Endothelial cell of umbilical vein (primary cell): ENCODE measurements at regions of chr9 and their contacts with region 1.

Region 1: GRCh38 chr9:72292256-72292682 is 72.7 kb downstream of the ZFAND5 start:
- DNase-seq: peak; percentile 58
- H3K4me3 ChIP-seq: no peak overlapping the region
- H3K27ac ChIP-seq: no peak overlapping the region
- H3K4me1 ChIP-seq: no peaks in the 10 kb centered on the region
- H3K27me3 ChIP-seq: peaks cover 2% of the 10 kb centered on the region in 2 experiments
- CTCF ChIP-seq: peak; percentile 11 to 20
- POLR2A ChIP-seq: no peak

Region 2: GRCh38 chr9:71768388-71769174 is 523.7 kb before region 1 on chr9 and contains the start of gene CEMIP2:
- CTCF ChIA-PET with region 1: no interaction called
- POLR2A ChIA-PET with region 1: no interaction called
- dilution Hi-C with region 1: no loop called
- intact Hi-C with region 1: no loop called
- DNase-seq: peak; percentile 89
- H3K4me3 ChIP-seq: peak within 1 kb of the TSS; percentile 97 to 98 (median 98)
- H3K27ac ChIP-seq: peak within 1 kb of the TSS; percentile 91
- H3K4me1 ChIP-seq: peaks cover 33% of the 10 kb centered on the region
- H3K27me3 ChIP-seq: no peaks in the 10 kb centered on the region
- CTCF ChIP-seq: peak; percentile 41 to 67
- POLR2A ChIP-seq: peak; percentile 98
- total RNA-seq, gene CEMIP2: 44.3 and 47.5 TPM in 2 replicates

Region 3: DNA sequence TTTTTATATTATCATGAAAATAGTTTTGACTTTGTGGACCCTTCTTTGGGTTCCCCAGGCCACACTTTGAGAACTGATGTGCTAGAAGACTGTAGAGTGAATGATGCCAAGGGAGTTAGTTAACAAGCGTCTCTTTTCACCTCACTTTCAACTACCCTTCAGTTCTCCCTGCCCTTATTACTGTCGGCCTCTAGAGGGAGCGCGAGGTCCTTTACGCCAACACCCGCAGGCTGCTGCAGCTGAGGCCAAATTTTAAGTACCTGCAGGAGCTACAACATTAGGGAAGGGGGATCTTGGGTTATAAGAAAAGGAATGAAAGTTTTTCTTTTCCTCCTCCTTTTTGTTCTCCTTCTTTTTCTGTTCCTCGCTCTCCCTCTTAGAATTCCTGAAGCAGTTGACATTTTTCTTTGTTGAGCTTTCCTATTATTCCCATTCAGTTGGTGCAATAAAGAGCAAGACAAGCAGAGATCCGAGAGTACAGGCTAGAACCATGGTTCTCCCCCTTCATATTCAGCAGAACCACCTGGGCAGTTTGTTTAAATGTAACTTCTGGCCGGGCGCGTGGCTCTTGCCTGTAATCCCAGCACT is 11.3 kb before region 1 on chr9:
- CTCF ChIA-PET with region 1: interaction called, 73 read pairs
- POLR2A ChIA-PET with region 1: no interaction called
- dilution Hi-C with region 1: no loop called
- intact Hi-C with region 1: no loop called
- DNase-seq: peak; percentile 69
- H3K4me3 ChIP-seq: no peak overlapping the region
- H3K27ac ChIP-seq: no peak overlapping the region
- H3K4me1 ChIP-seq: no peaks in the 10 kb centered on the region
- H3K27me3 ChIP-seq: peaks cover 4 to 5% of the 10 kb centered on the region in 2 experiments
- CTCF ChIP-seq: peak; percentile 85 to 92
- POLR2A ChIP-seq: no peak

Region 4: DNA sequence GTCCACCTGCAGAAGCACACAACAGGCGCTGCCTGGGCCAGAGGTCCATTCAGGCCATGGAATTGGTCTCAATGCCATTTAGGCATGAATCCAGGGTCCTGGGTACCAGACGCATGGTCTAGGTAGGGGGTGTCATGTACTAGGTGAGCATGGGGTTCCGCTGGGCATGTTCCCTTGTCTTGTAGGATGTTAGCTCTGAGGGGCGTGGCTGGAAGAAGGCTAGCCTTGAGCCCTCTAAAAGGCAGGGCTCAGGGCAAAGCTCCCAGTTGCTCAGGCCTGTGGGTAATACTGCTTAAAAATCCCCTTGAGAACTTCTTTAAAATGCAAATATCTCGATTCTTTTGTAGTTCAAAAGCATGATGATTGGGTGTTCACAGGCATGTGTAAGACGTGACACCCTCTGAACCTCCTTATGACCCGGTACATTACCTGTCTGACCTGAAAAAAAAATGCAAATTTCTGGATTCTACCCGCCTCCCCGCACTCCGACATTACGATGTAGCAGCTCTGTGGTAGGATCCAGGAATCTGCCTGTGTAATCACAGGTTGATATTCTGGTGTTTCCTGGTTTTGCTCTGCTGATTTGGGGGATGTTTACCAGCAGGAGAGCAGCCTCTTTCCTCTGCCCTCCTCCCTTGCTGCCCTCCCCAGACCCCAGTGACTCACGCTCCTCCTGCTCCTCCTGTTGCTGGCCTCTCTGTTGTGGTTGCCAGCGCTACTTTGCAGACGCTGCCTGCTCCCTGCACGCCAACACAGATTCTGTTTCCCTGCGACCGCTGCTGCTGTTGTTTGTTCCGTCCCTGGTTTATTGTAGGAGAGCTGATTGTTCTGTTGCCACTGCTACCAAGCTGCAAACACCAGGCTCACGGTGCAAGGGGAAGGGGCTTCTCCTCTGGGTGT is 234.9 kb after region 1 on chr9:
- CTCF ChIA-PET with region 1: interaction called, 3 read pairs
- POLR2A ChIA-PET with region 1: interaction called, 3 read pairs
- dilution Hi-C with region 1: no loop called
- intact Hi-C with region 1: loop called (anchors 5 kb)
- DNase-seq: peak; percentile 97
- H3K4me3 ChIP-seq: no peak overlapping the region
- H3K27ac ChIP-seq: peak overlapping the region; percentile 97
- H3K4me1 ChIP-seq: peaks cover 34% of the 10 kb centered on the region
- H3K27me3 ChIP-seq: no peaks in the 10 kb centered on the region
- CTCF ChIP-seq: no peak
- POLR2A ChIP-seq: no peak

Region 5: GRCh38 chr9:72599879-72600534 is 307.7 kb after region 1 on chr9:
- CTCF ChIA-PET with region 1: interaction called, 14 read pairs
- POLR2A ChIA-PET with region 1: no interaction called
- dilution Hi-C with region 1: no loop called
- intact Hi-C with region 1: no loop called
- DNase-seq: no peak
- H3K4me3 ChIP-seq: no peak overlapping the region
- H3K27ac ChIP-seq: no peak overlapping the region
- H3K4me1 ChIP-seq: no peaks in the 10 kb centered on the region
- H3K27me3 ChIP-seq: no peaks in the 10 kb centered on the region
- CTCF ChIP-seq: no peak
- POLR2A ChIP-seq: no peak

Region 6: DNA sequence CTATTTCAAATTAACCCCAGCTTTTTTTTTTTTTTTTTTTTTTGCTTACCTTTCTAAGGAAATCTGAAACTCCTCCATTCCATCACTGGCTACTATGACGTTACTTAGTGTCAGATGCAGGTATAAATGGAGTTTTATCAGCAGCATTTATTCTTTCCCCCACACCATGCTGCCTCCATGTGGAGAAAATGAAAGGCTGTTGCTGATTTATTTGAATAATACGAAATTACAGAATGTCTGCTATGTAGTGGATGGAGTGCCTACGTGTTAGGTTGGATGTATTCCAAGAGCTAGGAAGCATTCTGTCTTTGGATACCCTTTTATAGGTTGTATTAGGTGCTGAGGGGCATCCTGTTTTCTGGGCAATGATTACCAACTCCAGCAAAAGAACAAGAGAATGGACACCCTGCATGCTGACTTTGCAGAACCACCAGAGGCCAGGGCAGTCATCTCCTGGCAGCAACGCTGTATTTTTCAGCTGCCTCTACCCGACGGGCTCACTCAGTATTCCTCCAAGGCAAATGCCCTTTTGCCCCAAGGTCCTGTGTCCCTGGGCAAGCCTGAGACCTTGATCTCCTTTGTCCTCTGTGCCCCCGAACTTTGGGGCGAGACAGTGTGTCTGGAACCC is 461.1 kb after region 1 on chr9:
- CTCF ChIA-PET with region 1: interaction called, 29 read pairs
- POLR2A ChIA-PET with region 1: interaction called, 3 read pairs
- dilution Hi-C with region 1: no loop called
- intact Hi-C with region 1: loop called (anchors 1 kb)
- DNase-seq: peak; percentile 10
- H3K4me3 ChIP-seq: no peak overlapping the region
- H3K27ac ChIP-seq: no peak overlapping the region
- H3K4me1 ChIP-seq: no peaks in the 10 kb centered on the region
- H3K27me3 ChIP-seq: peaks cover 2 to 3% of the 10 kb centered on the region in 2 experiments
- CTCF ChIP-seq: peak in 1 of 2 donors; percentile 16
- POLR2A ChIP-seq: no peak